Activated CD4-positive, alpha-beta memory T cell treated with anti-CD3 and anti-CD28 coated beads for 36 hours (primary cell): ENCODE measurements at regions of chr1 and their contacts with region 1.

Region 1: DNA sequence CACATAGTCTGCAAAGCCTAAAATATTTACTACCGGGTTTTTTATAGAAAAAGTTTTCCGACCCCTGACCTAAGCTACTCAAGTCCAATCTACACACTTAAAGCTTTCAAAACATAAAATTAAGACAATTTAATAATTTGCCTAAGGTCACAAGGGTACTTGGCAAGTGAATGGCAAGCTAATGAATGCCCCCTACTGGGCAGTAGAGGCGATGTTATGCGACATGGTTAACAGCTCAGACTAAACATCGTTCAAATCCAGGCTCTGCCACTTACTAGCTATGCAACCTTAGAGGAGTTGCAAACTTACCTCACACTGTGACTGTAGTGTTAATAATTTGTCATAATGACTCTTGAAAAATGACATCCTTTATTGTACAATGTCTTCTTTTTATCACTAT is 317.2 kb upstream of the NFIA start:
- DNase-seq: no peak
- H3K4me3 Mint-ChIP-seq: no peak overlapping the region
- H3K27ac Mint-ChIP-seq: no peak overlapping the region
- H3K4me1 Mint-ChIP-seq: no peaks in the 10 kb centered on the region
- H3K27me3 Mint-ChIP-seq: no peaks in the 10 kb centered on the region

Region 2: DNA sequence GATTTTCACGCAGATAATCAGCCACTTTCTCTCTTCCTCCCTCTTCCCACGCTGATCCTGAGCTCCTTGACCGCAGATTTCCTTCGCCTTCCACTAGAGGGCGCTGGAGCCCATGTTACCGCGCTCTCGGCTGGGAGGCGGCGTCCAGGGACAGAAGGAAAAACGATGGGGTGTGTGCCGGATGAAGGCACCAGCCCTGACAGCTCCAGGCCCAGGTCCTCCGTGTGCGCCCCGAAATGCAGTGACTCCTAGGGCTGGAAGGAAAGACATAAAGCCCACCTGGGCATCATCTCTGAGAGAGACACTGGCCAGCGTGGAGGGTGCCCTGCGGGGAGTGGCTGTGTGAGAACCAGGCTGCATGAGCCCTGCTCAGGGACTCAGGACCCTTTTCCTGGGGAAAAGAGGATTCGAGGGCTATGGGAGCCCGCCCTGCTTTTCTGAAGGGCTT is 793.7 kb before region 1 on chr1:
- CTCF ChIA-PET with region 1: interaction called, 3 read pairs
- POLR2A ChIA-PET with region 1: no interaction called
- intact Hi-C with region 1: loop called (anchors 10 kb)
- DNase-seq: peak; percentile 60
- H3K4me3 Mint-ChIP-seq: no peak overlapping the region
- H3K27ac Mint-ChIP-seq: no peak overlapping the region
- H3K4me1 Mint-ChIP-seq: peaks cover 6% of the 10 kb centered on the region
- H3K27me3 Mint-ChIP-seq: peaks cover 21% of the 10 kb centered on the region